CD14-positive monocyte (primary cell): ENCODE measurements at regions of chr16 and their contacts with region 1.

Region 1: DNA sequence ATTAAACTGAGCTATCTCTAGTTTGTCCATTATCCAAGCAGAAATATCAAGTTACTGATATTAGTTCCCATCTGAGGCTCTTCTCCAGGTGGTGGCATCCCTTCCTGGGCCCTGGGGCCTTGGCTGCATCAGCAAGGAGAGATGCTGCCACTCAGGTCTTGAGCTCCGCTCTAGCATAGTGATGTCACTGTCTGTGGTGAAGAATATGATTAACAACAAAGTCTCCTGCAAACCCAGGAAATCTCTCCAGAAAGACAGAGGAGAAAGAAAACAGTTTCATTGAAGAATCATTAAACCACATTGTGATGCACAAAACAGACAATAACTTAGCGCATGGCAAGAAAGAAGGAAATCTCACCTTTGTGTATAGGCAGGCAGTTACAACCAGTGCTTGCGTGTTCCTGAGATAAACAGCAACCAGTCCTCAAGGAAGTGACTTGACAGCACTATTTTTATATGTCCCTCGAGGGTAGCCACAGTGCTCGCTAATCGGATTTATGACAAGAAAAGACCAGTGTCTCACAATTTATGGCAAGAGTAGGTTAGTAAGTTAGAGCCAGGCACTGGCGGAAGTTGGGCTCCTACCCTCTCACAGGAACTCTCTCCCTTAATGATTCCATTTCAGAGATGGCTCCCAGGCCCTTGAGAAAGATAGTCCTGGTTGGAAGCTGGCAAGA is 151.1 kb downstream of the AHSP start:
- DNase-seq: no peak
- H3K4me3 ChIP-seq: no peak overlapping the region
- H3K4me3 Mint-ChIP-seq: no peak overlapping the region
- H3K27ac ChIP-seq: no peak overlapping the region
- H3K27ac Mint-ChIP-seq: no peak overlapping the region
- H3K4me1 ChIP-seq: no peaks in the 10 kb centered on the region
- H3K4me1 Mint-ChIP-seq: no peaks in the 10 kb centered on the region
- H3K27me3 ChIP-seq: no peaks in the 10 kb centered on the region
- H3K27me3 Mint-ChIP-seq: peaks cover 0 to 2% (median 0%) of the 10 kb centered on the region in 3 donors
- CTCF ChIP-seq: no peak

Region 2: DNA sequence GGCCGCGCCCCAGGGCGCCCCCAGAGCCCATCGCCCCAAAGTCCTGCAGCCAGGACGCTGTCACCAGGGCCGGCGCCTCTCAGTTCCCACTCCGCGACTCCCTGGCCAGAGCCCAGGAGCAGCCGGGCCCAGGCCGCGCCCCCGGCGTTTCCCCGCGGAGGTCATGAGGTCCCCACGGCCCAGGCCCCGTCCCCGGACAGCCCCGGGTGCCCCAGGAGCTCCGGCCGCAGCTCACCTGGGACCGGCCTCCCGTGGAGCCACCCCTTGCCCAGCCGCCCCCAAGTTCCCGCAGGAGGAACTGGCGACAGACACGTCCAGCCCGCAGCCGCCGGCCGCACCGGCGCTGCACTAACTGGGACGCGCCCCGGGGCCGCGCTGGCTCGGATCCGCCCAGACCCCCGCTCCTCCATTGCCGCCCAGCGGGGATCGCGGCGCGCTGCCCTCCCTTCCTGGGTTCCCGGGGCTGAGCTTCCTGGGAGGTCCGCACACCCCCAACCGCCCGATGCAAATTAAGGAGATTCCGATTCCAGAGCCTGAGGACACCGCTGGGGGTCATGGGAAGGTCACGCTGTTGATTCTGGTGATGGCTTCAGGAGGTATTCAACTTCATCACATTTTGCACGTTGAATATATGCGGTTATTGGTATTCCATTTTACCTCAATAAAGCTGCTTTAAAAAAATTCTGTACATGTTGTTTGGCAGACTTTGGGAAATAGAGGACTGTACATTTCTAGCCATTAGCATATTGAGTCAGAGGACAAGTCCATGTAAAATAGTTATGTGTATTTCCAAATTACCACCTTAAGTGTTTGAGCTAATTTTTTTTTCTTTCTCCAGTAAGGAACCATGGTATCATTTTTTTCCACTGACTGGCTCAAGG is 141.2 kb before region 1 on chr16:
- intact Hi-C with region 1: loop called in 1 of 2 experiments (anchors 10 kb)
- DNase-seq: no peak
- H3K4me3 ChIP-seq: peak overlapping the region in 1 of 3 experiments; percentile 58
- H3K4me3 Mint-ChIP-seq: peak overlapping the region; percentile 61 to 74
- H3K27ac ChIP-seq: no peak overlapping the region
- H3K27ac Mint-ChIP-seq: no peak overlapping the region
- H3K4me1 ChIP-seq: peaks cover 0 to 7% of the 10 kb centered on the region in 2 donors
- H3K4me1 Mint-ChIP-seq: peaks cover 5% of the 10 kb centered on the region
- H3K27me3 ChIP-seq: peaks cover 29 to 49% of the 10 kb centered on the region in 2 donors
- H3K27me3 Mint-ChIP-seq: peaks cover 45 to 52% (median 45%) of the 10 kb centered on the region in 3 donors
- CTCF ChIP-seq: no peak

Region 3: DNA sequence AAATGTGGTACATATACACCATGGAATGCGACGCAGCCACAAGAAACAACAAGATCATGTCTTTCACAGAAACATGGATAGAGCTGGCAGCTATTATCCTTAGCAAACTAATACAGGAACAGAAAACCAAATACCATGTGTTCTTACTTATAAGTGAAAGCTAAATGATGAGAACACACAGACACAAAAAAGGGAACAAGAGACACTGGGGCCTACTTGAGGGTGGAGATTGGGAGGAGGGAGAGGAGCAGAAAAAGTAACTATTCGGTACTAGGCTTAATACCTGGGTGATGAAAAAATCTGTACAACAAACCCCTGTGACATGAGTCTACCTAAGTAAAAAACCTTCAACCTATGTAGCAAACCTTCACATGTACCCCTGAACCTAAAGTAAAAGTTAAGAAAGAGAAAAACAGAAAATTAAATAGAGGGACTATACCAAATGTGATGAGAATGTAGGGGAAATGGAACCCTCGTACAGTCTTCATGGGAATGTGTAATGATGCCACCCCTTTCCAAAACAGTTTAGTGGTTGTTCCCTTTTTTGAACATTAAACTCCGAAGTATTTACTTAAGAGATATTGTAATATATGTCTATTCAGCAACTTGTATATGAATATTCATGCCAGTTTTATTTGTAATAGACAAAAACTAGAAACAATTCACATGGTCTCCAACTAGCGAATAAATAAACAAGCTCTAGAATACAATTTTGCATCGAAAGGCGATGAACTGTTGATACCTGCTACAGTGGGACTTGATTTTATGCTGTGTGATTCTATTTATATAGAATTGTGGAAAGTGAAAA is 117.2 kb before region 1 on chr16:
- intact Hi-C with region 1: no loop called
- DNase-seq: no peak
- H3K4me3 ChIP-seq: no peak overlapping the region
- H3K4me3 Mint-ChIP-seq: no peak overlapping the region
- H3K27ac ChIP-seq: no peak overlapping the region
- H3K27ac Mint-ChIP-seq: no peak overlapping the region
- H3K4me1 ChIP-seq: no peaks in the 10 kb centered on the region
- H3K4me1 Mint-ChIP-seq: no peaks in the 10 kb centered on the region
- H3K27me3 ChIP-seq: peaks cover 0 to 2% of the 10 kb centered on the region in 2 donors
- H3K27me3 Mint-ChIP-seq: peaks cover 0 to 13% (median 1%) of the 10 kb centered on the region in 3 donors
- CTCF ChIP-seq: no peak